ENCODE measurements at regions of chr2 and their contacts with region 1.

Region 1: DNA sequence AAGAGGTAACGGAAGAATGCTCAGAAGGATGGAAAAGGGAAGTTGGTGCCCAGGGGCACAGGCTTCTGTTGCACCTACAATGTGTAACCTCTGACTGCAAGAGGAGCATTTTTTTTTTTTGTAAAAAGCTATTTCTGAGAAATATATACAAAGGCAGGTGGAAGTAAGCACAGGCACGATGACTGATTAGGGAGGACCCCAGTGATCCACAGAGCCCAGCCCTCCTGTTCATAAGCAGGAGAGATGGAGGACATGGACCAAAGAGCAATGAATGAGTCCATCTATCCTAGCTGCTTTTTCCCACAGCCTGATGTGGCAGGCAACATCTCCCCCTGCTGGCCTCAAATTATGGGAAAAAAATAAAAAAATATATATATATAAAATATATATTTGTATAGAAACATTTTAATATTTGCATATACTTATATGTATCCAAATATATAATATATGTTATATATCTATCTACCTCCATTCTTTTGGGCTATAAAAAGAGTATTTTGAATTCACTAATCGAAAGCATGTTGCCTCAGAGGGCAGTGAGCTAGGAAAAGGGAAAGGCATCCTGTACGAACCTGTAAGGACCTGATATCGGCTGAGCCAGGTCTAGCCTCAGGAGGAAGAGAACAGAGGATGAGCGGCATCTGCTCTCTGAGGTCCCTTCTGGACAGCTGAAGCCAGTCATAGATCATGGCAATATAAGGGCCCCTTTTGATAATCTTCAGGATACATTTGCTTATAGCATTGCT is 166.0 kb upstream of the STK17B start:
- DNase-seq: peak in 1 of 2 donors; percentile 64
- ATAC-seq: peak in 1 of 3 donors; percentile 40
- H3K4me3 ChIP-seq: no peak overlapping the region
- H3K4me3 Mint-ChIP-seq: no peak overlapping the region
- H3K27ac ChIP-seq: no peak overlapping the region
- H3K27ac Mint-ChIP-seq: no peak overlapping the region
- H3K4me1 ChIP-seq: no peaks in the 10 kb centered on the region
- H3K4me1 Mint-ChIP-seq: no peaks in the 10 kb centered on the region
- H3K27me3 ChIP-seq: no peaks in the 10 kb centered on the region
- H3K27me3 Mint-ChIP-seq: peaks cover 10 to 12% of the 10 kb centered on the region in 2 donors
- CTCF ChIP-seq: peak; percentile 56

Region 2: GRCh38 chr2:196077821-196078220 is 259.6 kb before region 1 on chr2:
- intact Hi-C with region 1: loop called (anchors 1 kb)
- DNase-seq: no peak
- ATAC-seq: no peak
- H3K4me3 ChIP-seq: no peak overlapping the region
- H3K4me3 Mint-ChIP-seq: no peak overlapping the region
- H3K27ac ChIP-seq: no peak overlapping the region
- H3K27ac Mint-ChIP-seq: no peak overlapping the region
- H3K4me1 ChIP-seq: no peaks in the 10 kb centered on the region
- H3K4me1 Mint-ChIP-seq: no peaks in the 10 kb centered on the region
- H3K27me3 ChIP-seq: no peaks in the 10 kb centered on the region
- H3K27me3 Mint-ChIP-seq: no peaks in the 10 kb centered on the region
- CTCF ChIP-seq: no peak

Region 3: GRCh38 chr2:196131384-196131937 is 205.9 kb before region 1 on chr2:
- intact Hi-C with region 1: loop called (anchors 2 kb)
- DNase-seq: peak; percentile 49 to 81
- ATAC-seq: peak; percentile 61 to 66 (median 64)
- H3K4me3 ChIP-seq: no peak overlapping the region
- H3K4me3 Mint-ChIP-seq: no peak overlapping the region
- H3K27ac ChIP-seq: no peak overlapping the region
- H3K27ac Mint-ChIP-seq: peak overlapping the region; percentile 80 to 81
- H3K4me1 ChIP-seq: peaks cover 8% of the 10 kb centered on the region
- H3K4me1 Mint-ChIP-seq: peaks cover 18 to 25% of the 10 kb centered on the region in 2 donors
- H3K27me3 ChIP-seq: no peaks in the 10 kb centered on the region
- H3K27me3 Mint-ChIP-seq: no peaks in the 10 kb centered on the region
- CTCF ChIP-seq: peak; percentile 69

Region 4: GRCh38 chr2:196535742-196536141 is 198.4 kb after region 1 on chr2:
- intact Hi-C with region 1: no loop called
- DNase-seq: no peak
- ATAC-seq: no peak
- H3K4me3 ChIP-seq: no peak overlapping the region
- H3K4me3 Mint-ChIP-seq: no peak overlapping the region
- H3K27ac ChIP-seq: no peak overlapping the region
- H3K27ac Mint-ChIP-seq: no peak overlapping the region
- H3K4me1 ChIP-seq: no peaks in the 10 kb centered on the region
- H3K4me1 Mint-ChIP-seq: no peaks in the 10 kb centered on the region
- H3K27me3 ChIP-seq: no peaks in the 10 kb centered on the region
- H3K27me3 Mint-ChIP-seq: peaks cover 9 to 26% of the 10 kb centered on the region in 2 donors
- CTCF ChIP-seq: no peak